H1 (cell line): ENCODE measurements at regions of chr5 and their contacts with region 1.

Region 1: GRCh38 chr5:59698207-59699178 is 195.0 kb downstream of the PDE4D start:
- DNase-seq: no peak
- H3K4me3 ChIP-seq: no peak overlapping the region
- H3K27ac ChIP-seq: no peak overlapping the region
- H3K4me1 ChIP-seq: no peaks in the 10 kb centered on the region
- H3K27me3 ChIP-seq: no peaks in the 10 kb centered on the region
- CTCF ChIP-seq: no peak
- EP300 ChIP-seq: no peak
- POLR2A ChIP-seq: no peak
- RAD21 ChIP-seq: no peak

Region 2: GRCh38 chr5:59709846-59710245 is 11.4 kb after region 1 on chr5:
- CTCF ChIA-PET with region 1: interaction called, 11 read pairs
- POLR2A ChIA-PET with region 1: no interaction called
- DNase-seq: no peak
- H3K4me3 ChIP-seq: peak overlapping the region in 1 of 4 experiments; percentile 38; a peak in 2 of 8 replicates
- H3K27ac ChIP-seq: no peak overlapping the region
- H3K4me1 ChIP-seq: peaks cover 0 to 21% (median 7%) of the 10 kb centered on the region in 4 experiments; a peak in 3 of 7 replicates
- H3K27me3 ChIP-seq: no peaks in the 10 kb centered on the region
- CTCF ChIP-seq: no peak
- EP300 ChIP-seq: no peak
- POLR2A ChIP-seq: no peak
- RAD21 ChIP-seq: no peak